ENCODE measurements at regions of chr10 and their contacts with region 1.

Region 1: DNA sequence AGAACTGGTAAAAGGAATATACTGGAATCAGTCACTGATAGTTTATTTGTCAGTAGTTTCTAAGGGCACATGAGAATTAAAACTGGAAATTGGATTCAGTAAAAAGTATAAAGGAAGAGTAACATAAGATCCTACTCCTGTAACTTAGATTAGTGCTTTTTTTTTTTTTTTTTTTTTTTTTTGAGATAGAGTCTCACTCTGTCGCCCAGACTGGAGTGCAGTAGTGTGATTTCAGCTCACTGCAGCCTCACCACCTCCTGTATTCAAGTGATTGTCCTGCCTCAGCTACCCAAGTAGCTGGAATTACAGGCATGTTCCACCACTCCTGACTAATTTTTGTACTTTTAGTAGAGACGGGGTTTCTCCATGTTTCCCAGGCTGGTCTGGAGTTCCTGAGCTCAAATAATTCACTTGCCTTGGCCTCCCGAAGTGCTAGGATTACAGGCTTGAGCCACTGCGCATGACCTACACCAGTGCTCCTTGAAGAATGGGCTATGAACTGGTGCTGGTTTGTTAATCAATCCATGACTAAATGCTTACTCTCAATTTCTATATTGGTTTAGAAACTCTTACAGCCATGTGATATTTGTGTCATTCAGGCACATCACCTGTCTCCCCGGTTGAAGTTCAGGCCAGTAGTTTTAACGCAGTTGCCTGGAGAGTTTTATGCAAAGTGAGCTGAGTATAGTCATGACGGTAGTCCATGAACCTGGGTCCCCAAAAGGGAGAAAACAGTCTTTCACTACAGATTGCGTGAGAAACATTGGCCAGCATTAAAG is 65.0 kb downstream of the ZEB1 start:
- DNase-seq: no peak
- ATAC-seq: peak; percentile 21; the same call in 1 of the 2 replicates
- H3K4me3 ChIP-seq: no peak overlapping the region
- H3K27ac ChIP-seq: no peak overlapping the region
- H3K4me1 ChIP-seq: peaks cover 4% of the 10 kb centered on the region; the same call in 1 of the 2 replicates
- H3K27me3 ChIP-seq: no peaks in the 10 kb centered on the region
- CTCF ChIP-seq: no peak

Region 2: DNA sequence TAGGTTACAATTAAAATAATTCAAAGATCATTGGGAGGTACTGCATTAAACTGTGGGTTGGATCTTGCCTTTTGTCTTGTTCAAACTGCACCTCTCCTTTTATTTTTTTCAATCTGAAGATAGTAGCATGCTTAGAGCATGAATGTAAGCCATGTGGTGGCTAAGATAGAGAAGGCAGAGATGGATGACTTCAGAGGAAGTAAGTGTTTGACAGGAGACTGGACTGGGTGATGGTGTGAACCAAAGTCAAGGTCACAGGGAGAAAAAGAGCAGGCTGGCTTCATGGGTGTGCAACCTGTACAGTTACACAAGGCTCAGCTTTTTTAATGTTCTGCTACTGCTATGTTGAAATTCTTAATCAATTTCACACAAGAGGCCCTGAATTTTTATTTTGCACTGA is 20.6 kb after region 1 on chr10:
- CTCF ChIA-PET with region 1: no interaction called
- POLR2A ChIA-PET with region 1: interaction called, 14 read pairs
- in situ Hi-C with region 1: no loop called
- intact Hi-C with region 1: no loop called
- DNase-seq: no peak
- ATAC-seq: no peak
- H3K4me3 ChIP-seq: no peak overlapping the region
- H3K27ac ChIP-seq: no peak overlapping the region
- H3K4me1 ChIP-seq: peaks cover 11% of the 10 kb centered on the region; the same call in 1 of the 2 replicates
- H3K27me3 ChIP-seq: no peaks in the 10 kb centered on the region
- CTCF ChIP-seq: no peak